HAP-1 (cell line): ENCODE measurements at regions of chr20 and their contacts with region 1.

Region 1: DNA sequence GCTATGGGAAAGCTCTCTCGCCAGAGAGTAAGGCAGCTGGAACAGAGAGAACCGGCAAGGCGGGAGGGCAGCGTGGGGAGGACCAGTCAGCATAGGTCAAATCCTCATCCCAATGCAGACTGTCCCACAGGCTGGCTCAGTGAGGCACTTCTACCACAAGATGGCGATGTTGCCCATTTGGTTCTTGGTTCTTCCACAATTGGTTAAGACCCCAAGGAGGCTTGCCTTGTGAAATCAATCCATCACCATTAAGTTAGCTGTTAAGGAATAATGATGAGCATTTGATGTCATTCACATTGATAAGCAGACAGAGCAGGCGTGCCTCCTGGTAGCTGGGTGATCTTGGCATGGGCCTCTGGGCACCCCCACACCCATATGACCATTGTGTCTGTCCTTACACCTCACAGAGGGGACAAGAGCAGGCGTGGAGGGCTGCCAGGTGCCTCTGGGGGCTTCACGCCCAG is 2.4 kb downstream of the CSTL1 start:
- DNase-seq: peak; percentile 69 to 87
- H3K4me3 ChIP-seq: no peak overlapping the region
- H3K4me1 ChIP-seq: no peaks in the 10 kb centered on the region
- H3K27me3 ChIP-seq: no peaks in the 10 kb centered on the region

Region 2: GRCh38 chr20:23613676-23614075 is 171.8 kb after region 1 on chr20:
- in situ Hi-C with region 1: loop called (anchors 5 kb)
- DNase-seq: no peak
- H3K4me3 ChIP-seq: no peak overlapping the region
- H3K4me1 ChIP-seq: no peaks in the 10 kb centered on the region
- H3K27me3 ChIP-seq: no peaks in the 10 kb centered on the region